PC-3 (cell line): ENCODE measurements at regions of chr6 and their contacts with region 1.

Region 1: DNA sequence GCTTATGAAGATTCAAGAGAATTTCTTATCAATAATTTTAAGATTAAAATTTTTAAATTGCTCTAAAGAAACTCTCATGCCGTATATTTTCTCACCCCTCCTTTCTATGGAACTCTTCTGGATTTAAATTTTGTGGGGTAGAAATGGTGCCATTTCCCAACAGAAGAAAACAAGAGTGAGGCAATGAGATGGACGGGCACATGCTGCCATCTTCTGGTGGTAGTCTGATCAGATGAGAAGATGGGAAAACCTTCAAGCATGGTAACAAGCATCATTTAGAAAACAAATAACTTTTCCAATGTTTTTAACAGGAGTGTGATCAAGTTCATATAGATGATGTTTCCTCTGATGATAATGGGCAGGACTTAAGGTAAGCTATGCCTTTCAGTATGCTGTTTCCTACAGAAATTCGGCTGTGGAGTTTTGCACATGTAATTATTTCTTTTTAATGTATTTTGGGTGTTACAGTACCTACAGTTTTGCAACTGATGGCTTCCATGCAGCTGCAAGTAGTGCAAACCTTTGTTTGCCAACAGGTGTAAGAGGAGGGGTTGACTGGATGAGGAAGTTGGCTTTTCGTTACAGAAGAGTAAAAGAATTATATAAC is 271.4 kb downstream of the EYA4 start:
- DNase-seq: peak; percentile 70
- ATAC-seq: 0 out of 2 replicates have a peak, but pooled peaks have one; percentile 42
- H3K4me3 ChIP-seq: no peak overlapping the region
- H3K27ac ChIP-seq: no peak overlapping the region
- H3K4me1 ChIP-seq: no peaks in the 10 kb centered on the region
- H3K27me3 ChIP-seq: no peaks in the 10 kb centered on the region
- CTCF ChIP-seq: peak; percentile 74

Region 2: GRCh38 chr6:133033263-133033662 is 479.2 kb before region 1 on chr6:
- CTCF ChIA-PET with region 1: no interaction called
- POLR2A ChIA-PET with region 1: no interaction called
- intact Hi-C with region 1: no loop called
- DNase-seq: no peak
- ATAC-seq: no peak
- H3K4me3 ChIP-seq: no peak overlapping the region
- H3K27ac ChIP-seq: no peak overlapping the region
- H3K4me1 ChIP-seq: peaks cover 6% of the 10 kb centered on the region; the same call in 1 of the 2 replicates
- H3K27me3 ChIP-seq: no peaks in the 10 kb centered on the region
- CTCF ChIP-seq: no peak

Region 3: DNA sequence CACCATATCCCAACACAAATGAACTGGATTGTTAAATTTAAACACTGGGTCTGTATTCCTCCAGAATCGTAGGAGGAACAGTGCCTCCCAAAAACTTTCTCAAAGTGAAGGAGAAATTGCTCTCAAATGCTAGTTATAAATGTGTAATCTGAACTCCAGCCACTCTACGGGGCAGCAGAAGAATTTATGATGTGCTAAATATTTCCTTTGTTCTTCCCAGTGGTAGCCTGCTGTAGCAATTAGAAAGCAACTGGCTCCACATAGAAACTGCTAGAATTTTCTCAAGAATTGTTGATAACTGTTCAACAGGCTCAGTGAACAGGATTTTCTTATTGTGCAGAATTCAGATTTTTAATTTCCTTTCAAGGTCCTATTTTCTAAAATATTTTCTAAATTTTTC is 321.2 kb before region 1 on chr6:
- CTCF ChIA-PET with region 1: no interaction called
- POLR2A ChIA-PET with region 1: no interaction called
- intact Hi-C with region 1: loop called (anchors 2 kb)
- DNase-seq: no peak
- ATAC-seq: no peak
- H3K4me3 ChIP-seq: no peak overlapping the region
- H3K27ac ChIP-seq: no peak overlapping the region
- H3K4me1 ChIP-seq: peaks cover 4% of the 10 kb centered on the region
- H3K27me3 ChIP-seq: no peaks in the 10 kb centered on the region
- CTCF ChIP-seq: no peak

Region 4: DNA sequence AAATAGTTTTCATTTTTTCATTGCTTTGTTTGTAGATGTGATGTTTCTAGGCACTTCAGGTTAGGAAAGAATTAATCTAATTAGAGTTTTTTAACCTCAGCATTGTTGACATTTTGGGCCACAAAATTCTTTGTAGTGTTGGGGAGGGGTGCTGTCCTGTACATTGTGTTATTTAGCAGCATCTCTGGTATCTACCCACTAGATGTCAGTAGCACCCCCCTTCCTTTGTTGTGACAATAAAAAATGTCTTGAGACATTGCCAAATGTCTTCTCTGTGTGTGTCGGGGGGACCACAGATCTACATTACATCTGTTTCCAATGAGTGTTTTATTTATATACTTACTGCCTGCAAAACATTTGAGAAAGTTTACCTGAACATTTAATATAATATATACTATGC is 225.7 kb before region 1 on chr6:
- CTCF ChIA-PET with region 1: no interaction called
- POLR2A ChIA-PET with region 1: no interaction called
- intact Hi-C with region 1: loop called (anchors 5 kb)
- DNase-seq: peak; percentile 47
- ATAC-seq: no peak
- H3K4me3 ChIP-seq: no peak overlapping the region
- H3K27ac ChIP-seq: no peak overlapping the region
- H3K4me1 ChIP-seq: no peaks in the 10 kb centered on the region
- H3K27me3 ChIP-seq: no peaks in the 10 kb centered on the region
- CTCF ChIP-seq: peak; percentile 61

Region 5: GRCh38 chr6:133368664-133369063 is 143.8 kb before region 1 on chr6:
- CTCF ChIA-PET with region 1: no interaction called
- POLR2A ChIA-PET with region 1: no interaction called
- intact Hi-C with region 1: loop called (anchors 5 kb)
- DNase-seq: peak; percentile 51
- ATAC-seq: peak; percentile 74
- H3K4me3 ChIP-seq: no peak overlapping the region
- H3K27ac ChIP-seq: no peak overlapping the region
- H3K4me1 ChIP-seq: 0 out of 2 replicates have a peak, but pooled peaks cover 4% of the 10 kb centered on the region
- H3K27me3 ChIP-seq: no peaks in the 10 kb centered on the region
- CTCF ChIP-seq: peak; percentile 56

Region 6: GRCh38 chr6:133526436-133526835 is 13.9 kb after region 1 on chr6:
- CTCF ChIA-PET with region 1: no interaction called
- POLR2A ChIA-PET with region 1: no interaction called
- intact Hi-C with region 1: no loop called
- DNase-seq: no peak
- ATAC-seq: no peak
- H3K4me3 ChIP-seq: no peak overlapping the region
- H3K27ac ChIP-seq: no peak overlapping the region
- H3K4me1 ChIP-seq: no peaks in the 10 kb centered on the region
- H3K27me3 ChIP-seq: no peaks in the 10 kb centered on the region
- CTCF ChIP-seq: no peak